ENCODE measurements at regions of chr10 and their contacts with region 1.

Region 1: DNA sequence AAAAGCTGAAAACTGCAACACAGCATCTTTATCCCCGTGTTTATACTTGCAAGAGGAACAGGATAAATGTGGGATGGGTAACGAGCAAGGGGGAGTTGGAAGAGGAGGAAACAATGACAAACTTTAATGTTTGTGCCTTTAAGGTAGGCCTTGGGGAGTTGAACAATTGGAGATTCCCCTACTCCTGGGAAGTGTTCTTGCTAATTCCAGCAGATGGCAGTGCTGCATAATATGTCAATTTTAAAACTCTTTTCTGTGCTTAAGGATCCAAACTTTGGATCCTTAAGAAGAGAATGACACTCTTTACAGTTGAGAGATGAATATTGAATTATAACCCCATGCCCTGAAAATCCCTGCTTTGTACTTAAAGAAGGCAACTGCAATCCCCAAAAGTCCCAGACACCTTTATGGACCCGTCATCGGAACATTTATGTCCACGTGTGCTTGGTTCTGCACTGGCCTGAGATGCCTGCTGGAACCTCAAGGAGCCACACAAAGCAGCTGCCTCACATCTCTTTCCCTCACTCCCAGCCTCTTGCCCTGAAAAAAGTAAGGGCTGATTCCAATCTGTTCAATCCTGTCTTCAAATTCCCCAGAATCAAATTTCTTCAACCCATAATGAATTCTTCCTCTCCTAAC is 12.0 kb downstream of the IFIT5 start:
- DNase-seq: no peak
- H3K4me3 ChIP-seq: no peak overlapping the region
- H3K27ac ChIP-seq: no peak overlapping the region
- H3K4me1 ChIP-seq: no peaks in the 10 kb centered on the region
- H3K27me3 ChIP-seq: no peaks in the 10 kb centered on the region
- CTCF ChIP-seq: peak; percentile 62 to 82 (median 81)
- POLR2A ChIP-seq: no peak

Region 2: DNA sequence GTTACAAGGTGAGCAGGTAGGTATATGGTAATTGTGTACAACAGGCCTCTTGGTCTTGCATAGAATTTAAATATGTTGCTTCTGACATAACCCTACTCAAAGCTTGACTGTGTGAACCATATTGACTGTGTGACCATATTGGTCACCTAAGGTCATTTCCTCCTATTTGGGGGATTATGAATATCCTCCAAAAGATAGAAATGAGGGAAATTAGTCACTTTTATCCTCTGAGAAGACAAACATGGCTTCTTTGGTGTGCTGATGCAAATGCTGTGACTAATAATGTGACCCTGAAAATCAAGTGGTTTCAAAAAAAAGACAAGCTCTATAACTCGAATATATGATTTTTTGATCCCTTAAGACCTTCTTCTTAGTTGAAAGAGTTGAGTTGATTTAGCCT is 15.9 kb after region 1 on chr10:
- intact Hi-C with region 1: loop called (anchors 2 kb)
- DNase-seq: no peak
- H3K4me3 ChIP-seq: no peak overlapping the region
- H3K27ac ChIP-seq: no peak overlapping the region
- H3K4me1 ChIP-seq: no peaks in the 10 kb centered on the region
- H3K27me3 ChIP-seq: no peaks in the 10 kb centered on the region
- CTCF ChIP-seq: no peak
- POLR2A ChIP-seq: no peak

Region 3: GRCh38 chr10:89553064-89553734 is 126.8 kb after region 1 on chr10:
- intact Hi-C with region 1: loop called (anchors 5 kb)
- DNase-seq: no peak
- H3K4me3 ChIP-seq: no peak overlapping the region
- H3K27ac ChIP-seq: no peak overlapping the region
- H3K4me1 ChIP-seq: no peaks in the 10 kb centered on the region
- H3K27me3 ChIP-seq: no peaks in the 10 kb centered on the region
- CTCF ChIP-seq: no peak
- POLR2A ChIP-seq: no peak

Region 4: GRCh38 chr10:89563861-89564478 is 137.6 kb after region 1 on chr10:
- intact Hi-C with region 1: no loop called
- DNase-seq: no peak
- H3K4me3 ChIP-seq: no peak overlapping the region
- H3K27ac ChIP-seq: no peak overlapping the region
- H3K4me1 ChIP-seq: no peaks in the 10 kb centered on the region
- H3K27me3 ChIP-seq: no peaks in the 10 kb centered on the region
- CTCF ChIP-seq: peak; percentile 79 to 84 (median 79)
- POLR2A ChIP-seq: no peak